HEK293 (cell line): ENCODE measurements at regions of chr4 and their contacts with region 1.

Region 1: GRCh38 chr4:15963001-15963451 is at the start of gene FGFBP2:
- H3K4me3 ChIP-seq: no peak within 1 kb of the TSS
- H3K27ac ChIP-seq: no peak within 1 kb of the TSS
- H3K4me1 ChIP-seq: no peaks in the 10 kb centered on the region
- CTCF ChIP-seq: no peak

Region 2: DNA sequence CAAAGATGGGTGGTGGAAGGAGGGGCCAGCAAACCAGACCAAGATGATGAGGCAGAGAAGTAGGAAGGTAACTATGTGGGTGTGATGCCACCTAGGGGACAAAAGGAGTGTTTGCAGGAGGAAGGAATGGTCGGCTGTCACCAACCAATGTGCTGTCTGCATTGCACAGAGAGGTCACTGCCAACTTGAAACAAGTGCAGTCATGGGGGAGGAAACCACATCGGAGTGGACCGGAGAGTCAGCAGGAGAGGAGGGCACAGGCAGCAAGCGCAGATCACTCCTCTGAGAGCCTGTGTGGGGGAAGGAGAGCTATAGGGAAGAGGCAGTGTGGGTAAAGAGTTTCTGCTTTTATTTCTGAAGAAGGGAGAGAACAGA is 38.4 kb after region 1 on chr4:
- CTCF ChIA-PET with region 1: interaction called, 12 read pairs
- POLR2A ChIA-PET with region 1: no interaction called
- H3K4me3 ChIP-seq: no peak overlapping the region
- H3K27ac ChIP-seq: no peak overlapping the region
- H3K4me1 ChIP-seq: no peaks in the 10 kb centered on the region
- CTCF ChIP-seq: peak; percentile 83